ENCODE measurements at regions of chr6 and their contacts with region 1.

Region 1: GRCh38 chr6:13814176-13814937 is at the start of gene MCUR1:
- DNase-seq: peak; percentile 85
- H3K4me3 Mint-ChIP-seq: peak within 1 kb of the TSS; percentile 83
- H3K27ac Mint-ChIP-seq: peak within 1 kb of the TSS; percentile 82
- H3K4me1 Mint-ChIP-seq: peaks cover 28% of the 10 kb centered on the region
- H3K27me3 Mint-ChIP-seq: no peaks in the 10 kb centered on the region
- total RNA-seq, gene MCUR1: 27.1 to 28.3 TPM

Region 2: GRCh38 chr6:13328076-13328874 is 486.1 kb before region 1 on chr6 and contains the start of gene TBC1D7:
- CTCF ChIA-PET with region 1: no interaction called
- intact Hi-C with region 1: loop called (anchors 1 kb)
- DNase-seq: peak; percentile 94
- H3K4me3 Mint-ChIP-seq: peak within 1 kb of the TSS; percentile 95
- H3K27ac Mint-ChIP-seq: peak within 1 kb of the TSS; percentile 93
- H3K4me1 Mint-ChIP-seq: peaks cover 18% of the 10 kb centered on the region
- H3K27me3 Mint-ChIP-seq: no peaks in the 10 kb centered on the region
- total RNA-seq, gene TBC1D7: 25.4 to 27.1 TPM

Region 3: DNA sequence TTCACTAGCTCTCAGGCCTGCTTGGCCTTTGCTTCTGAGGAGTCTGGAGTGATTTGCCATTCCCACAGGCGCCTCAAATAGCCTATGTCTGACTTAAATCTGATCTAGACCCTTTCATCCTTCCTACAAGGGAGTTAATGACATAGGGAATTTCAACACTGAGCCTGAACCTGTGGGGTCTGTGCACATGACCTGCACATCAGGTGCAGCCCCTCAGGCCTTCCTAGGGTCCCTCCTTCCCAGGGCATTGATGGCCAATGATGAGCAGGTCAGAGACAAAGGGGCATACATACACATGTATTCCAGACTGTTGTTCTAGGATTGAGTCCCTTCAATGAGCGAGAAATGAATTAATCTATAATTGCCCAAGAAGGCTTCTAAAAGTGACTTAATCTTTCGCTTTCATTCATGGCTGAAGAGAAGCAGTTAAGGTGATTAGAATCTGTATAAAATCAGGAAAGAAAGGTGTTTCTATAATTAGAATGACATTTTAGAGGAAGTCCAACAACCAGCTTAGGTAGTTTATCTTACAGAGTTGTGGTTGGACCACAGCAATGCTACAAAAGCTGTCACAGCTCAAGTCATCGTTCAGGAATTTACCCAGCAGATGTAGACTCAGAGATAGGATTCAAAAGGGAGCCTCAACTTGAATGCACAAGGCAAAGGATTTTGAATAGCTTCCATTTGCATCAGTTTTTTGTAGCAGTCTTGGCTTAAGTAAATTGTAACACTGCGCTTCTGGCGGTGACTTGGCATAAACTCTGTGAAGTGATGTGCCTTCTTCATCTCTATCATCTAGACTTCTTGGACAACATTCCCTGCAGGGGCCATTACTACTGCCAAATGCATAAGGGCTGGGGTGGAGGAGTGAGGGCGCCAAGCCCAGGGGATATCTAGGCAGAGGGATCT is 459.1 kb before region 1 on chr6:
- CTCF ChIA-PET with region 1: no interaction called
- intact Hi-C with region 1: no loop called
- DNase-seq: peak; percentile 70
- H3K4me3 Mint-ChIP-seq: peak overlapping the region; percentile 63
- H3K27ac Mint-ChIP-seq: peak overlapping the region; percentile 99
- H3K4me1 Mint-ChIP-seq: peaks cover 45% of the 10 kb centered on the region
- H3K27me3 Mint-ChIP-seq: no peaks in the 10 kb centered on the region

Region 4: DNA sequence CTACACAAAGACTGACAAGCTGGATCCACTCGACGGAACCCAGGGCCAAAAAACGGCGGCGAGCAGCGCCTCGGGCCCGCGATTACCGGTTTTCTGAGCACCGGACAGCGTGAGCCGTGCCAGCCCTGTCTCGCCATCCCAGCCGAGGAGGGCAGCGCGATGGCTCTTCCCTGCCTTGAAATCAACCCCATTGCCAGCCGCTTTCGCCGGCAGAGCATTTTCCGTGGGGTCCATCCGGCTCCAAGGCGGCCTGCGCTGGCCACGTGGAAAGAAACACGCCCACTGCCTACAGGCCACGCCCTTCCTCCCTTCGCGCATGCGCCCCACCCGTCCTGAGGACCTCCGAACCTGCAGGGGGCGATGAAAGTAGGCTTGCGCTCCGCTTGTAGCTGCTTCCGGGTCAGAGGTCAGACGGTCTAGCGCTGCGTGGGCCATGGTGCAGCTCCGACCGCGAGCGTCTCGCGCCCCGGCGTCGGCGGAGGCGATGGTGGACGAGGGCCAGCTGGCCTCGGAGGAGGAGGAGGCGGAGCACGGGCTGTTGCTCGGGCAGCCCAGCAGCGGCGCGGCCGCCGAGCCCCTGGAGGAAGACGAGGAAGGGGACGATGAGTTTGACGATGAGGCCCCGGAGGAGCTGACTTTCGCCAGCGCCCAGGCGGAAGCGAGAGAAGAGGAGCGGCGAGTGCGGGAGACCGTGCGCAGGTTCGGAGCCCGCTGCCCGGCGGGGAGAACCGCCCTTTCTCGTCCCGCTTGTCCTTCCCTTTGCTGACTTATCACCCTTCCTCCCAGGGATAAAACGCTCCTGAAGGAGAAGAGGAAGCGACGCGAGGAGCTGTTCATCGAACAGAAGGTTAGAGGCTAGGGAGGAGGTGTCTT is 199.2 kb before region 1 on chr6 and contains the start of gene NOL7:
- CTCF ChIA-PET with region 1: interaction called, 4 read pairs
- intact Hi-C with region 1: loop called (anchors 1 kb)
- DNase-seq: peak; percentile 99
- H3K4me3 Mint-ChIP-seq: peak within 1 kb of the TSS; percentile 99
- H3K27ac Mint-ChIP-seq: peak within 1 kb of the TSS; percentile 93
- H3K4me1 Mint-ChIP-seq: peaks cover 51% of the 10 kb centered on the region
- H3K27me3 Mint-ChIP-seq: no peaks in the 10 kb centered on the region
- total RNA-seq, gene NOL7: 79.5 to 80.8 TPM

Region 5: GRCh38 chr6:13733178-13733887 is 81.0 kb before region 1 on chr6:
- CTCF ChIA-PET with region 1: no interaction called
- intact Hi-C with region 1: no loop called
- DNase-seq: no peak
- H3K4me3 Mint-ChIP-seq: no peak overlapping the region
- H3K27ac Mint-ChIP-seq: no peak overlapping the region
- H3K4me1 Mint-ChIP-seq: peaks cover 9% of the 10 kb centered on the region
- H3K27me3 Mint-ChIP-seq: peaks cover 5% of the 10 kb centered on the region

Region 6: DNA sequence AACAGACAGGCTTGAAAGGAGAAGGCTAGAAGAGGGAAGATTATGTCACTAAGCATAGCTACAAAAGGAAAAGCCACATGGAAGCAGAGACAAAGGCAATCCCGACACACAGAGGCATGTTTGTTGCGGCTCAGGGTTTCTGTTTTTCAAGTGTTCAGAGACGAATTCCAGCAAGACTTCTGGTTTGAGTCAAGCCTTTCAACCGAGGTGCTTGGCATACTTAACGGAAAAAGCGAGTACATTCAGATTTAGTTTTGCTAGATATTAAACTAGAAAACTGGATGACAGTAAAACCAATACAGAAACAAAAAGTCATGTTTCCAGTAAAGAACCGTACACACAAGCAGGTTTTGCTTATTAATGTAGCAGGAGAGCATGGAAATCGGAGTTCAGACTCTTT is 27.2 kb before region 1 on chr6:
- CTCF ChIA-PET with region 1: no interaction called
- intact Hi-C with region 1: loop called (anchors 1 kb)
- DNase-seq: peak; percentile 75
- H3K4me3 Mint-ChIP-seq: peak overlapping the region; percentile 14
- H3K27ac Mint-ChIP-seq: peak overlapping the region; percentile 79
- H3K4me1 Mint-ChIP-seq: peaks cover 34% of the 10 kb centered on the region
- H3K27me3 Mint-ChIP-seq: no peaks in the 10 kb centered on the region

Region 7: DNA sequence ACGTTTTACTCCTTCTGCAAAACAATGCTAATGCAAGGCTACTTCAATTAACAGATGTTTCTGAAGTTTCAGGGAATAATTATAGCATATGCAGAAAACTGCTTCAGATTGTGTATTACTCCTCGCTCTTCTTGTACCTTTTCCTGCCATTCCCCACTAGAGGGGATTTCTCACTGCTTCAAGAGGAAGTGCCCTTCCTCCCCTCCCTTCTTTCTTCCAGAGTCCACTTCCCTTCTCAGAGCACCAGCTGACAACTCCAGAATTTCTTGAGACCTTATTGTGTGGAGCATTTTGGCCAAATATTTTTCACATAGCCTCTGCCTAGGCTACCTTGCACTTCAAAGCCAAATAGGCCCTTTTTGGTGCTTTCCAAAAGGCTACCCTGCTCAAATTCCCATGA is 12.7 kb after region 1 on chr6:
- CTCF ChIA-PET with region 1: no interaction called
- intact Hi-C with region 1: no loop called
- DNase-seq: no peak
- H3K4me3 Mint-ChIP-seq: no peak overlapping the region
- H3K27ac Mint-ChIP-seq: no peak overlapping the region
- H3K4me1 Mint-ChIP-seq: no peaks in the 10 kb centered on the region
- H3K27me3 Mint-ChIP-seq: no peaks in the 10 kb centered on the region

Region 8: DNA sequence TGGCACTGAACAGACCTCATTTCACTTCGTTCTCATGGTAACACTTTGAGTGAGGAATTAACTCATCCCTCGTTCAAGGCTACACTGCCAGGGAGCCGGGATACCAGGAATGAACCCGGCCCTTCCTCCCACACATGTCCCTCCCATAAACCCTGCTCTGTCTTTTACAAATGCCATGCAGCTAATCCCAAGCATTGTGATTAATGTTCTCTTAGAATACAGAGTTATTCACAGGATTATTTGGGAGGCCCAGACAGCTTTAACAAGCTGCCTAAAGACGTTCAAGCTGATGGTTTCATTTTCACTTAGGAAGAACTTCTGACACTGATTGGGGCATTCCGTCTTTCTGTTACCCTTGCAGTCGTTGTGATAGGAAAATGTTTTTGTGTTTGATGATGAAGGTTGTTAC is 260.7 kb after region 1 on chr6:
- CTCF ChIA-PET with region 1: no interaction called
- intact Hi-C with region 1: loop called (anchors 5 kb)
- DNase-seq: peak; percentile 29
- H3K4me3 Mint-ChIP-seq: peak overlapping the region; percentile 46
- H3K27ac Mint-ChIP-seq: peak overlapping the region; percentile 73
- H3K4me1 Mint-ChIP-seq: peaks cover 53% of the 10 kb centered on the region
- H3K27me3 Mint-ChIP-seq: no peaks in the 10 kb centered on the region

Measured in activated naive CD4-positive, alpha-beta T cell treated with anti-CD3 and anti-CD28 coated beads for 36 hours (primary cell).